Activated CD4-positive, alpha-beta T cell treated with anti-CD3 and anti-CD28 coated beads, Interleukin-2, amount 10 ng/mL, durations not matched to agents 24 days and 14 days (primary cell): ENCODE measurements at regions of chr16 and their contacts with region 1.

Region 1: DNA sequence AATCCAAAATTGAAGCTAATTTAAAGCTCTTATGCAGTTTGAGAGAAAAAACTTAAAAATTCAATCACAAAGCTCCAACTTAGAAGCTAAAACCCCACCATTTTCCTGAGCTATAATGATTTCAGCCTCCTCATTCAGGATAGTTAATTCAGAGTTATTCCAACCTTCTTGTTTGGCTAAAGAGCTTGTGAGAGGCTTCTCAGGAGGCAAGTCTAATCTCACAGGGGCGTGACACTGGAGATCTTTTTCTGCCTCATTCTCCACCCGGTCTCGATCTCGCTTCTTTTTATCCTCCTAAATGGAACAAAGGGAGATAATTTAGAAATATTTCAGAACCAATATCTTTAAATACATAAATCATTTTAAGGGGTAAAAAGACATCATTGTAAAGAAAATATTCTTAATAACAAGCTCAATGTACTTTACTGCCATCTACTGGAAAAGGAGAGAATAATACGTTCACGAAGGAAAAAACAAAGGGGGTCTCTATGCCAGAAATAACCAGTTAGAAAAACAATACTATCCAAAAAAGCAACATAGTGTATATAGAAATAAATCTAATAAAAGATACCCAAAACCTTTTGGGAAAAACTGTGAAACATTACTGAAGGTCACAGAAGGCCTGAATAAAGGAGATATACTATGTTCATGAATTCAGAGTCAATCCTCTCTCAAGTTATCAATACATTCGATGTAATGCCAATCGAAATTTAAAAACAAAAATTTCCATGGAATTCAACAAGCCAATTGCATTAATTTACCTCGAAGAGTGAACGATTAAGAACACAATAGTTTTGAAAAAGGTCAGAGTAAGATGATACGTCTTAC is 13.9 kb downstream of the BRD7 start:
- DNase-seq: no peak
- H3K4me3 Mint-ChIP-seq: no peak overlapping the region
- H3K27ac Mint-ChIP-seq: peak overlapping the region; percentile 42
- H3K4me1 Mint-ChIP-seq: peaks cover 18% of the 10 kb centered on the region
- H3K27me3 Mint-ChIP-seq: no peaks in the 10 kb centered on the region

Region 2: DNA sequence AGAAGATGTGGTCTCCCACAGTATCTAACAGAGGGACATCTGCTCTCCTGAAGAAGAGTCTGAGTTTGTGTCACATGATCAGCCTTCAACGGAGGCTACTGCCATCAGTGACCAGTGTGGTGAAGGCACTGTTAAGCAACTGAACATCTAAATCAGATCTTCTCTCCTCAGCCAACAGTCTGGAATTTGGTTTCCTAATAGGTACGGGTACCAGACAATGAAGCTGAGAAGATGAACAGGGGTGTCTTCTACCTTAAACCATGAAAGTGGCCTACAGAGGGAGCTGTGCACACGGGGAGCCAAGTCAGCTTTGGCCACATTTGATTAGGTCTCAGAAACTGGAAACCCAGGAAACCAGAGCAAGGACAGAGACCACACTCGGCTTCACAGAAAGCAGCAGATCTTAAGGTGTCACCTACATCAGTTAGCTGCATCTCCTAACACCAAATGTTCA is 27.9 kb before region 1 on chr16:
- intact Hi-C with region 1: loop called (anchors 1 kb)
- DNase-seq: peak; percentile 92
- H3K4me3 Mint-ChIP-seq: peak overlapping the region; percentile 13
- H3K27ac Mint-ChIP-seq: peak overlapping the region; percentile 61
- H3K4me1 Mint-ChIP-seq: peaks cover 40% of the 10 kb centered on the region
- H3K27me3 Mint-ChIP-seq: no peaks in the 10 kb centered on the region

Region 3: GRCh38 chr16:50335196-50335958 is 19.5 kb before region 1 on chr16:
- intact Hi-C with region 1: loop called (anchors 2 kb)
- DNase-seq: peak; percentile 73
- H3K4me3 Mint-ChIP-seq: no peak overlapping the region
- H3K27ac Mint-ChIP-seq: peak overlapping the region; percentile 83
- H3K4me1 Mint-ChIP-seq: peaks cover 26% of the 10 kb centered on the region
- H3K27me3 Mint-ChIP-seq: no peaks in the 10 kb centered on the region

Region 4: DNA sequence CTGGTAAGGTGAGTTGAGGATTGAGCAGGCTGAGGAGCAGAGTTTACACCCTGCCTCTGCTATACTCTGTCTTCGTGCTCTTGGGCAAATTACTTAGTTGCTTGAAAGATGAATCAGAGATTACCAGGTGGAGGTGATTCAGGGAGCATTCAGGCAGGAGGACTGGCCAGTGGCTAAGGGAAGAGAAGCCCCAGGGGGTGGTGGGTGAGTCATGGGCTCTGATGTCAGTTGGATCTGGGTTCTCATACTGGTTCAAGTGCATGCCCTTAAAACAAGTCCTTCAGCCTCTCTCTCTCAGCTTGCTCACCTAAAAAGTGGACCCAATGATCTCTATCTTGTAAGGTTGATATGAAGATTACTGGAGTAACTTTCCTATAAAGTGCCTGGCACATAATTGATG is 42.4 kb after region 1 on chr16:
- intact Hi-C with region 1: no loop called
- DNase-seq: peak; percentile 42
- H3K4me3 Mint-ChIP-seq: no peak overlapping the region
- H3K27ac Mint-ChIP-seq: no peak overlapping the region
- H3K4me1 Mint-ChIP-seq: peaks cover 4% of the 10 kb centered on the region
- H3K27me3 Mint-ChIP-seq: no peaks in the 10 kb centered on the region